WTC11 (cell line): ENCODE measurements at regions of chr10 and their contacts with region 1.

Region 1: DNA sequence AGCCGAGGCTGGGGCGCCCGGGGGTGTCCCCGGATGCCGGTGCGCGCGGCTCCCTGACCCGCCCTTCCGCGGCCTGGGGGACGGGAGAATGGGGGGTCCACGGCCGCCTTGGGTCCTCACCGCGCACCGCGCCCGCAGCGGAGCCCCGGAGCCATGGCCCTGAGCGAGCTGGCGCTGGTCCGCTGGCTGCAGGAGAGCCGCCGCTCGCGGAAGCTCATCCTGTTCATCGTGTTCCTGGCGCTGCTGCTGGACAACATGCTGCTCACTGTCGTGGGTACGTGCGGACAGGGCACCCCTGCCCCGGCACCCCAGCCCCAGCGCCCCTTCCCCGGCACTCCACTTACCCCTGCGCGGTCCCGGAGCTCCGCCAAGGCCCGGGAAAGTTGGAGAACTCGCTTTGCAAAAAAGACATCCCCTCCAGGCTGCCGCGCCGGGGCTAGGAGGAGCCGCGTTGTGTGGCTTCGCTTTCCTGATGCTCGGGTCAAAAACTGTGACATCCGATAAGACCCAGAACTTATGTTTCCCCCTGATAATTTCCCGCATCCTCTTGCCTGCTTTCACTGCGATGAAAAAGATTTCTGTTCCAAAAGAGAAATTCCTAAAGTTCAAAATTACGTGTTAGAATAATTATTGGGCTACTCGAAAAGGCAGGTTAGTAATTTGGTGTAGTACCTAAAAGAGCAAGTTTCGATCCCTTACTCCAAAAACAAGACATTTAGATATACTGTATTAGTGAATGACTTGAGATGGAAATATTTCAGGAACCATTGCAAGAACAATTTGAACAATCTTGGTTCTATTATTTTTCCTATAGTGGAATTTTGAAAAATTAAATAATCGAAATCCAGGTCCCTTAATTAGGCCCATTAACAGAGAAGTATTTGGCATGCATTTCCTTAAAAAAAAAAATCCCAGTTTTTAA is 888 bp downstream of the SLC18A2 start:
- DNase-seq: peak; percentile 47
- ATAC-seq: peak; percentile 58
- H3K4me3 Mint-ChIP-seq: peak overlapping the region; percentile 68
- H3K27ac Mint-ChIP-seq: no peak overlapping the region
- H3K4me1 Mint-ChIP-seq: peaks cover 7% of the 10 kb centered on the region
- H3K27me3 Mint-ChIP-seq: peaks cover 35% of the 10 kb centered on the region
- CTCF ChIP-seq: no peak

Region 2: DNA sequence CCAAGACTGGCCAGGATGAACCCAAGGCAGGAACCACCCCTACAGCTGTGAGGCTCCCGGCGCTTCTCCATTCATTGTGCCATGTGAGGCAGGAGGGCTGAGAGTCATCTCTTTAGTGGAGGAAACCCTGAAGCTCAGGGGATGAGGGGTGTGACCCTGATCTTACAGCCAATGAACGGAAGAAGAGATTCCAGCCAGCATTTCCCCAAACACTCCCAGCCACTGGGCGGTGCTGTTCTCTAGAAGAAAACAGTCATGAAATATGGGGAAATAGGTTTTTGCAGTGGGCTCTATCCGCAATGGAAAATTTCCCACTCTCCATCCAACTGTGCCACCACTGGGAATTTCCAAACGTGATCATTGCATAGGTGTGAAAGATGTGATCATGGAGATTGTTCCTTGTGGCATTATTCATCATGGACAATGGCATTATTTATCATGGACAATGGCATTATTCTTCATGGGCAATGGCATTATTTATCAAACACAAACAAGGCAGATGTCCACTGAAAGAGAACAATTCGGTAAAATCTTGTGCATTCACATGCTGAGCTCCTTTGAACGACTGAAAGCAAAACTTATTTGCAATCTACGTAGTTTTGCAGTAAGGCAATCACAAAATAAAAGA is 14.9 kb before region 1 on chr10:
- CTCF ChIA-PET with region 1: interaction called, 21 read pairs
- POLR2A ChIA-PET with region 1: no interaction called
- DNase-seq: peak; percentile 68
- ATAC-seq: peak; percentile 97
- H3K4me3 Mint-ChIP-seq: no peak overlapping the region
- H3K27ac Mint-ChIP-seq: no peak overlapping the region
- H3K4me1 Mint-ChIP-seq: peaks cover 14% of the 10 kb centered on the region
- H3K27me3 Mint-ChIP-seq: peaks cover 8% of the 10 kb centered on the region; the same call in 1 of the 2 replicates
- CTCF ChIP-seq: no peak